IMR-90 (cell line): ENCODE measurements at regions of chr1 and their contacts with region 1.

Region 1: GRCh38 chr1:201170533-201171062 is 16.3 kb upstream of the TMEM9 start:
- DNase-seq: peak; percentile 80
- ATAC-seq: peak; percentile 100
- H3K4me3 ChIP-seq: peak overlapping the region; percentile 70
- H3K27ac ChIP-seq: peak overlapping the region; percentile 6; the same call in 1 of the 2 replicates
- H3K4me1 ChIP-seq: 0 out of 2 replicates have a peak, but pooled peaks cover 2% of the 10 kb centered on the region
- H3K27me3 ChIP-seq: peaks cover 8% of the 10 kb centered on the region
- CTCF ChIP-seq: no peak
- POLR2A ChIP-seq: peak; percentile 68
- RAD21 ChIP-seq: no peak

Region 2: DNA sequence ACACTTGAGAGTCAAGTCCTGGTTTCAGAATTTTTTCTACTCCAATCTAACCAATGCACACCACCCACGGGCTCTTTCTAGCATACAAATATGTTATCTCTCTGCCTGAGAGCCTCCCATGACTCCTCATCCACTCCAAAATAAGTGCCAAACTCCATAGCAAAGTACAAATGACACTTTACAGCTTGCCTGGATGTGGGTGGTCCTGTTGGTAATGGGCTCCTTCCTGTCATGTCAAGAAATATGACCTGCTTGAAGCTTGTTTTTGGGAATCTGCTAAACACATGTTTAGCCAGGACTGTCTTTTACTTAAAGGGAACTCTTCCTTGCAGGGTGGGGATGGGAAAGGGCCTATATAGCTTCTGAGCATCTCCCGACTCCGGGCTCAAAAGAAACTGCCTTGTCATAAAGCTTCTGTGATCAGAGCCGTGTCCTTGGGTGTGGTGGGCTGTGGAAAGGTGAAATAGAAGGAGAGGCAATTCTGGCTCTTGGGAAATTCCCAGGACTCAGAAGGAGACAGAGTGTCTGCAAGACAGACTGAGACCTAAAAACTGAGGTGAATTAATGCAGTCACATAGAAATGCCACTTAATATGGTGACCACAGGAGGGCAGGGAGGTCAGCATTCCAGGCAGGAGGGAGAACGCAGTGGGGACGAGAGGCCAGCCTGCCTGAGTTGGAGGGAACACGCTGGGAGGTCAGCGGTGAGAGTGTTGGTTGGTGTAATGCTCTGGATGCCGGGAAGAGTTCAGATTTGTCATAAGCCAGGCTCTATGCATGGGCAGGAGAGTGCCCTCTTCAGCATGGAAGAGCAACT is 13.9 kb after region 1 on chr1:
- CTCF ChIA-PET with region 1: no interaction called
- POLR2A ChIA-PET with region 1: interaction called, 11 read pairs
- dilution Hi-C with region 1: no loop called
- in situ Hi-C with region 1: no loop called
- intact Hi-C with region 1: no loop called
- DNase-seq: peak; percentile 88
- ATAC-seq: peak; percentile 100
- H3K4me3 ChIP-seq: no peak overlapping the region
- H3K27ac ChIP-seq: no peak overlapping the region
- H3K4me1 ChIP-seq: peaks cover 5% of the 10 kb centered on the region
- H3K27me3 ChIP-seq: peaks cover 8% of the 10 kb centered on the region; the same call in 1 of the 2 replicates
- CTCF ChIP-seq: peak; percentile 81
- POLR2A ChIP-seq: no peak
- RAD21 ChIP-seq: peak; percentile 69